IMR-90 (cell line): ENCODE measurements at regions of chr12 and their contacts with region 1.

Region 1: GRCh38 chr12:50517456-50518048 is 12.8 kb downstream of the DIP2B start:
- DNase-seq: peak; percentile 84
- ATAC-seq: peak; percentile 92
- H3K4me3 ChIP-seq: peak overlapping the region; percentile 29; the same call in 1 of the 2 replicates
- H3K27ac ChIP-seq: peak overlapping the region; percentile 45; the same call in 1 of the 2 replicates
- H3K4me1 ChIP-seq: peaks cover 13% of the 10 kb centered on the region
- H3K27me3 ChIP-seq: no peaks in the 10 kb centered on the region
- CTCF ChIP-seq: no peak
- POLR2A ChIP-seq: no peak
- RAD21 ChIP-seq: peak; percentile 5; the same call in 1 of the 2 replicates

Region 2: DNA sequence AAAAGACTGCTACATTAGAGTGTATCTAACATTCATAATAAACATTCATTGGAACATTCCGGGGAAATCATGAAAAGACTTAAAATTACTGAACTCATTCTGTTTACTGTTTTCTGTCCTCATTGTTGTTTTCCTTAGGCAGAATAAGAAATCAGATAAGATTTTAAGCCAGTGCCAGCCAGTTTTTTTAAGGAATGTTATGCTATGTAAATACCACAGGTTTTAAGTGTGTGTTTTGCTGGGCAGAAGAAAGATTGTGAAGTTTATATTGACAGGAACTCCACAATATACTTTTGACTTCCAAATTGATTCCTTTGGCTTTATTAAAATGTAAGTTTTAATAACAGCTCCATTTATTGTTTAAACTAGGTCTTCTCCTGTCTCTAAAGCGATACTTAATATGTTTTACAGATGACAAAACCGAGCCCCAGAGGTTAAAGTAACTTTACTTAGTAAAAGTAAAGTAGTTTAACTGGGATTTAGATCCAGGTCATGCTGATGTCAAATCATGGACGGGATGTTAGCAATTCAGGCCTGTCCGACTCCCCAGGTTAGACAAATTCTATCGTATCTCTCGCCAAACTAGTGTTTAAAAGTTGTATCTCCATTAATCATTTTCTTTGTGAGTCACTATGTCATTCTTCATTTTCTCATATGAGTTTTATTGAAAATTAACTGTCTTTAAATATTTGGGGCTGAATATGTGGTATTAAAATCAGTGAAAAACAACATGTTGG is 115.1 kb before region 1 on chr12:
- CTCF ChIA-PET with region 1: no interaction called
- POLR2A ChIA-PET with region 1: no interaction called
- dilution Hi-C with region 1: no loop called
- in situ Hi-C with region 1: no loop called
- intact Hi-C with region 1: no loop called
- DNase-seq: no peak
- ATAC-seq: no peak
- H3K4me3 ChIP-seq: peak overlapping the region; percentile 81
- H3K27ac ChIP-seq: peak overlapping the region; percentile 41; the same call in 1 of the 2 replicates
- H3K4me1 ChIP-seq: peaks cover 3% of the 10 kb centered on the region; the same call in 1 of the 2 replicates
- H3K27me3 ChIP-seq: no peaks in the 10 kb centered on the region
- CTCF ChIP-seq: no peak
- POLR2A ChIP-seq: no peak
- RAD21 ChIP-seq: no peak

Region 3: GRCh38 chr12:50555471-50555885 is 37.9 kb after region 1 on chr12:
- CTCF ChIA-PET with region 1: no interaction called
- POLR2A ChIA-PET with region 1: no interaction called
- dilution Hi-C with region 1: no loop called
- in situ Hi-C with region 1: no loop called
- intact Hi-C with region 1: loop called (anchors 5 kb)
- DNase-seq: no peak
- ATAC-seq: no peak
- H3K4me3 ChIP-seq: no peak overlapping the region
- H3K27ac ChIP-seq: no peak overlapping the region
- H3K4me1 ChIP-seq: peaks cover 4% of the 10 kb centered on the region
- H3K27me3 ChIP-seq: no peaks in the 10 kb centered on the region
- CTCF ChIP-seq: no peak
- POLR2A ChIP-seq: no peak
- RAD21 ChIP-seq: no peak